OCI-LY7 (cell line): ENCODE measurements at regions of chr10 and their contacts with region 1.

Region 1: DNA sequence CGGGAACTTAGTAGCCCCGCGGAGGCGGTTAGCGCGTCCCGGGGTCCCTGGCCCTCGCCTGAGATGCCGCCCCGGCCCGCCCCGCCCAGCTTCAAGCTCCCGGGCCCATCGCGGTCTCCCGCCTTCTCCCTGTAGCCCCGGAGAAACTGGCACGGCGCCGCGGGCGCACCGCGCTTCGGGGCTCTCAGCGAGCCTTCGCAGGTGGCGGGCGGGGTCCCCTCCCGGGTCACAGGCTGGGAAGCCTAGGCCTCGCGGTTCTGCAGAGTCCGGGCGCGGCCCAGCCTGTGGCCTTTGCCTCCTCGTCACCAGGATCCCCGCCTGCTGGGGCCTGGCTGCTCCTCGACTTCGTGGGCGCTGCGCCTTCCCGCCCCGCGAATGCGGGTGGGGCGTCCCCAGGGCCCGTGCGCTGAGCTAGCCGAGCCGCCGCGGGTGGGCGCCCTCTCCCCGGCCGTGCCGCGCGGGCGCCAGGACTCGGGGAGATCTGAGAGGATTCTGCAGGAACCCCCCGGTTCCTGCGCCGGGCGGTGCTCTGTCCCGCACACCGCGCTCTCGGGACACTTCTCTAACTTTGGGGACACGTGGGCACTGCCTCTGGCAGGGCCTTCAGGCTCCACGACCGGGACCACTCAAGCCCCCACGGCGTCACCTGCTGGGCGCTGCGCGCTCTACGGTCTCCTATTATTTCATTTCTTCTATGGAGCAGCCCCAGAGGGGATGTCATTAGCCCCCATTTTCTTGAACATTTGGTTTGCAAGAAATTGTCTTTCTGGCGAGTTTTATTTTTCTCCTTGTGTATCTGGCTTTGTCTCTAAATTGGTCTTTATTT is 682 bp upstream of the RGS10 start:
- DNase-seq: peak; percentile 85
- H3K4me3 ChIP-seq: peak overlapping the region; percentile 69
- H3K27ac ChIP-seq: no peak overlapping the region
- H3K4me1 ChIP-seq: peaks cover 47% of the 10 kb centered on the region
- CTCF ChIP-seq: peak; percentile 97

Region 2: GRCh38 chr10:119199231-119199992 is 343.8 kb before region 1 on chr10:
- CTCF ChIA-PET with region 1: no interaction called
- POLR2A ChIA-PET with region 1: no interaction called
- intact Hi-C with region 1: loop called (anchors 2 kb)
- DNase-seq: peak; percentile 85
- H3K4me3 ChIP-seq: no peak overlapping the region
- H3K27ac ChIP-seq: no peak overlapping the region
- H3K4me1 ChIP-seq: no peaks in the 10 kb centered on the region
- CTCF ChIP-seq: peak; percentile 91

Region 3: DNA sequence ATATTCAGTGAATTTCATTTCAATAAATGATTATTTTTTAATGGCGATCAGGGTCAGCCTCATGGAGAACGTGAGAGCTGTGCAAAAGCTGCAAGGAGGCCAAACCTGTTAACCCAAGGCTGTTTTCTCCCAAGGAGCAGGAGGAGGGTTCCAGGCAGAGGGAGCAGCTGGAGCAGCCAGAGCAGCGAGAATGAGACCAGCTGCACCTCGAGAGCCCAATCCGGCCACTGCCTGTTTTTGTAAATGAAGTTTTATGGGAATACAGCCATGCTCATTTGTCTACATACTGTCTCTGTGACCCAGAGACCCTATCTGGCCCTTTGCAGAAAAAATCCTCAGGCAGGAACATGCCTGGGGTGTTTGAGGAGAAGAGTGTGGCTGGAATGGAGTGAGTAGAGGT is 231.0 kb before region 1 on chr10:
- CTCF ChIA-PET with region 1: no interaction called
- POLR2A ChIA-PET with region 1: no interaction called
- intact Hi-C with region 1: no loop called
- DNase-seq: no peak
- H3K4me3 ChIP-seq: no peak overlapping the region
- H3K27ac ChIP-seq: no peak overlapping the region
- H3K4me1 ChIP-seq: peaks cover 44% of the 10 kb centered on the region
- CTCF ChIP-seq: no peak

Region 4: GRCh38 chr10:119445311-119445934 is 97.8 kb before region 1 on chr10:
- CTCF ChIA-PET with region 1: interaction called, 9 read pairs
- POLR2A ChIA-PET with region 1: no interaction called
- intact Hi-C with region 1: loop called (anchors 1 kb)
- DNase-seq: peak; percentile 82
- H3K4me3 ChIP-seq: no peak overlapping the region
- H3K27ac ChIP-seq: no peak overlapping the region
- H3K4me1 ChIP-seq: peaks cover 26% of the 10 kb centered on the region
- CTCF ChIP-seq: peak; percentile 92

Region 5: GRCh38 chr10:119517235-119518141 is 25.7 kb before region 1 on chr10:
- CTCF ChIA-PET with region 1: interaction called, 5 read pairs
- POLR2A ChIA-PET with region 1: interaction called, 18 read pairs
- intact Hi-C with region 1: no loop called
- DNase-seq: peak; percentile 59
- H3K4me3 ChIP-seq: peak overlapping the region; percentile 47
- H3K27ac ChIP-seq: peak overlapping the region; percentile 77
- H3K4me1 ChIP-seq: peaks cover 29% of the 10 kb centered on the region
- CTCF ChIP-seq: no peak